ENCODE measurements at regions of chr19 and their contacts with region 1.

Region 1: DNA sequence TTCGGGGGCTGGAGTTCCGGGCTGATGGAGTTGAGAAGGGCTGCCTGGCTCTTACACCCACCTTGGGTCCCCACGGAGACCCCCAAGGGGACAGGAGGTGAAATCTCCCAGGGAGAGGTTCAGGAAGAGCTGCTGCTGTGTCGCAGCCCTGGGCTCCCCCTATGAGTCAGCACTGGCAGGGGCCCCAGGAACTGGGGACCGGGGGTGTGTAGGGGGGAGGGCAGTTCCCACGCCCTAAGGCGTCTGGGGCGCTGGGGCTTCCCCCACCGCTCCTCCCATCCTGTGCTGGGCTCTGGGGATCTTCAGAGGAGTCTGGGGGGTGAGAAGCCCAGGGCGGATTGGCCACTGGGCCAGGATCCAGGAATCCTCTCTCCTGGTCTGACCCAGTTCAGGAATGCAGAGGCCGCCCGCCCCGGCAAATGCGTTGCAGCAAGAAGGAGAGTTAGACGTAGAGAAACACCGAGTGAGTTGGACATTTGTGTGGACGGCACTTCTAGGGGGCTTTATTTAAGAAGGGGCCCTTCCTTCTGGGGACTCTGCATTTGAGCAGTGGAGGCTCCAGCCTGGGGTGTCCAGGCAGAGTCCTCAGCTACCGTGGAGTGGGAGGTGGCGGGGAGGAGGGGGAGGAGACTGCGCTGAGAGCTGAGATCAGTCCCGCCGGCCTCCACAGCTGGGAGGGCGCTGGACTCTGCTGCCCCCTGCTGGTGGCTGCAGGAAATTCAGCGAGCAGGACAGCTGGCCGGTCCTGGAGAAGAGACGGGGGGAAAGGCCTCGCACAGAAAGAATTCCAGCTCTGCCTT is 15.0 kb upstream of the NANOS3 start:
- DNase-seq: peak; percentile 98
- H3K4me3 ChIP-seq: peak overlapping the region; percentile 51 to 60 (median 54)
- H3K27ac ChIP-seq: peak overlapping the region; percentile 85 to 97 (median 92)
- H3K4me1 ChIP-seq: peaks cover 25 to 54% (median 48%) of the 10 kb centered on the region in 4 donors
- H3K27me3 ChIP-seq: no peaks in the 10 kb centered on the region
- CTCF ChIP-seq: peak; percentile 98 to 100 (median 99)
- EP300 ChIP-seq: no peak
- POLR2A ChIP-seq: no peak

Region 2: GRCh38 chr19:13784731-13785452 is 77.0 kb before region 1 on chr19:
- intact Hi-C with region 1: loop called (anchors 2 kb)
- DNase-seq: no peak
- H3K4me3 ChIP-seq: peak overlapping the region in 1 of 4 donors; percentile 2
- H3K27ac ChIP-seq: peak overlapping the region in 1 of 4 donors; percentile 38
- H3K4me1 ChIP-seq: peaks cover 22 to 59% (median 51%) of the 10 kb centered on the region in 4 donors
- H3K27me3 ChIP-seq: no peaks in the 10 kb centered on the region
- CTCF ChIP-seq: peak; percentile 69 to 77 (median 72)
- EP300 ChIP-seq: no peak
- POLR2A ChIP-seq: no peak